HEK293T (cell line): ENCODE measurements at regions of chr12 and their contacts with region 1.

Region 1: DNA sequence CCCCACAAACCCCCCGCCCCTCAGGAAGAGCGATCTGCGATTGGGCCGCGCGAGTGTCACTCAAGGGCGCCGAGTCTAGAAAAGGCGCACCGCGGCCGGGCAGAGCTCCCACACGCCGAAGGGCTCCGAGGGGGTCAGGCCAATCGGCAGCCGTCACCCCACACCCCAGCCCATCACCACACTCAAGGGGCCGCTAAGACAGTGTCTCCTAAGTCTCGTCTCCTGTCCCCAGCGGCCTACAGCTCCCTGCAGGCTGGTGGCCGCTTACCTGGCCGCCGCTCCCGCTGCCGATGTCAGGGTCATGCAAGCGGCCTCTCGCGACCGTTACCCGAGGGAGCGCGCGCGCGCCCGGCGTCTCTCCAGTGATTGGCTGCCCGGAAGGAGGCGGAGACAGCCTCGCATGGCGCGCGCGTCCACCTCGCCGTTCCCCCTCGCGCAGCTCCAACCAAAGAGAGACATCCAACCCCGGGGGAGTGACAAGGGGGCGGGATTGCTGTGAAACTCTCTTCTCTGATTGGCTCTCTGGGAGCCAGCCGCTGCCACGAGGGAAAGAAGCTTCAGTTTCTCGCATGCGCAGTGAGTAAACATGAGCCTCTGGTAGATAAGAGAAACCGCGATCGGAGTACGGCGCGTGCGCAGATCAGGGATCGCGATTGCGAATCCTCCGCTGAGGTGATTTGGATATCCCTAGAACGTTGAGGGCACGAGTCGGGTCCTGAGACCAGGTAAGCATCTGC is at the starts of genes MPHOSPH9 and MTRFR:
- DNase-seq: peak; percentile 97

Region 2: DNA sequence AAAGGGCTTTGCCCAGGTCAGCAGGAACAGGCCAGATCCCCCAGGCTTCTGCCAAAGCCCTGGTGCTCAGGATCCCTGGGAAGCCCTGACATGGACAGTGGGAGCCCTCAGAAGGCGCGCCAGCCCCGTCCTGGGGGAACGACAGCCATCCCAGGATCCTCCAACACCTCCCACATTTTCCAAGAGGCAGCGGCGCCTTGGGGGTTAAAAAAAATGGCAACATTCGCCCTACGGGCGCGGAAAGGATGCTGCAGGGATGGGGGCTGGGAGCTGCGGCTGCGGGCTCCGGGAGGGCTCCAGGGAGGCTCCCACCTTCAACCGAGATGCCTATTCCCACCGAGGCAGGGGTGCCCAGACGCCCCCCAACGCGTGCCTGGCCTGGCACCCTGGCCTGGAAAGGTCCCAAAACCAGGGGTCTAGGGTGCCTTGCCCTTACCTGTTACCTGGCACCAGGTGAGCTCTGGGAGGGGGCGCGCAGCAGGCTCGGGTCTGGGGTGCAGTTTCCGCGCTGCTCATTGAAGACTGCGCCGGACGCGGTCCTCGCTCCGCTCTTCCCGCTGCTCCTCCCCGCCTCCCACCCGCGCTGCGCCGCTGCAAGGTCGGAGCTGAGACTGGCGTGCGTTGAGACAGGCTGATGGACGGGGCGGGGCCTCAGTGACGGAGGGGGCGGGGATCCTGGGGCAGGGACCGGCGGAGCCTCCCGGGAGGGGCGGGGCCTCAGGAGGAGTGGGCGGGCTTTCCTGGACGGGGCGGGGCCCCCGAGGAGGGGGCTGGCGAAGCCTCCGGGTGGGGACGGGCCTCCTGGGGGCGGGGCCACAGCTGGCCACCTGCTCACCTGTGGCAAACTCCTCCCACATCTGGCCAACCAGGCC is 266.9 kb before region 1 on chr12 and contains the start of gene ABCB9:
- CTCF ChIA-PET with region 1: no interaction called
- POLR2A ChIA-PET with region 1: interaction called, 10 read pairs
- DNase-seq: peak; percentile 99

Region 3: GRCh38 chr12:123150744-123151456 is 82.1 kb before region 1 on chr12 and contains the start of gene PITPNM2:
- CTCF ChIA-PET with region 1: no interaction called
- POLR2A ChIA-PET with region 1: interaction called, 16 read pairs
- DNase-seq: peak; percentile 69

Region 4: GRCh38 chr12:123250484-123251383 is 17.8 kb after region 1 on chr12:
- CTCF ChIA-PET with region 1: interaction called, 17 read pairs
- POLR2A ChIA-PET with region 1: interaction called, 48 read pairs
- DNase-seq: no peak

Region 5: DNA sequence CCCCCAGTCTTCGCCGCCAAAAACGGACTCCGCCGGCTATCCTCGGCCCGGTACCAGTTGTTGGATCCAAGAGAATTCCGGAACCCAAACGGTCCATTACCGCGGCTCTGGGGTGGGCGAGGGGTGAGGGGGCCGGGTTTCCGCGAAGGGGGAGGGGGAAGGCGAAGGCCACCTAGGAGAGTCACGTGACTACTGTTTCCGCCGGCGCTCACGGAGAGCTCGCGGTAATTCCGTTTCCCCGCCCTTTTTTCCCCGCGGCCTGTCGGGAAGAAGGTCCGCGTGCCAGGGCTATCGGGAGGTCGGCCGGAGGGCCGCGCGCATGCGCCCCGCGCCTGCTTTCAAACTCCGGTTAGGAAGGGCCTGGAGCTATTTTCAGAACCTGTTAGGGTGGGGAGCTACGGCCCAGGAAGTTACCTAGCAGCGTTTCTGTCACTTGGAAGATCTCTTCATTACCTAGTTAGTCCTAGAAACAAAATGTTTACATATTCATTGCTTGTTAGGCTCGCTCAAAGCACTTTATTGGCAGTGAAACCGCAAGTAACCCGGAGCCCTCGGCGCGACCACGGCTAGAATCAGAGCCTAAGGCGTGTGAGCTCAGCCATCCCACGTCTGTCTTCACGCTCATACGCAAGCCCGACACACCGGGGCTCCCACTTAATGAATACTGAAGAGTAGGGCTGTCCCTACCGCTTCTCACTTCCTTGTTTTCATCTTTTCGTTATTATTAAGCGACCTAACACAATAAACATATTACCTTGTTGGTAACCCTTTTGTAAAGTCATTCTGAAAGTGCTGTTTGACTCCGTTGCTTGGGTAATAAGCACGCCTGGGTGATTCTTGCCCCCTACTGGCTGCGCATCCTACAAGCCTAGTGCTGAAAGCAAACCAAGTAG is 132.3 kb after region 1 on chr12:
- CTCF ChIA-PET with region 1: no interaction called
- POLR2A ChIA-PET with region 1: interaction called, 21 read pairs
- DNase-seq: peak; percentile 98